Right ventricle myocardium inferior (tissue), 1 donor: ENCODE measurements at regions of chr3 and their contacts with region 1.

Region 1: DNA sequence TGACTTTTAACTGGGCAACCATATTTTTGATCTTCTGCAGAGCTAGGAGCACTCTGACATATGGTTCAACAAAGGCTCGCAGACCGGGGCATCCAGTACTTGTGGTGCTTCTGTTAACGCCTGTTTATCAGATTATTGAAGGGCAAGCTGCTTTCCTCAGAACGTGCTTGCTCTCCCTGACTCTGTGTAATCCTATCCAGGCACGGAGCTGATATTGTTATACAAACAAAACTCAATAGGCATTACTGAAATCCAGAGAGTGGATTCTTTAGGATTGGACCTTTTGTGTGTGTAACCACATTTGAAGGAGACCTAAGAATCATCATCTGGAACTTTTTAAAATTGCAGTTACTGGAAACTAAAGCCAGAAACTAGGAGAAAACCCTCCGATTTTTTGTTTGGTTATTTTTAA is 246.5 kb downstream of the PTPRG start:
- DNase-seq: no peak
- ATAC-seq: peak; percentile 42

Region 2: GRCh38 chr3:61574854-61575253 is 233.0 kb before region 1 on chr3:
- intact Hi-C with region 1: loop called (anchors 5 kb)
- DNase-seq: no peak
- ATAC-seq: no peak

Region 3: GRCh38 chr3:61725851-61726333 is 82.0 kb before region 1 on chr3:
- intact Hi-C with region 1: loop called (anchors 5 kb)
- DNase-seq: no peak
- ATAC-seq: peak; percentile 88

Region 4: DNA sequence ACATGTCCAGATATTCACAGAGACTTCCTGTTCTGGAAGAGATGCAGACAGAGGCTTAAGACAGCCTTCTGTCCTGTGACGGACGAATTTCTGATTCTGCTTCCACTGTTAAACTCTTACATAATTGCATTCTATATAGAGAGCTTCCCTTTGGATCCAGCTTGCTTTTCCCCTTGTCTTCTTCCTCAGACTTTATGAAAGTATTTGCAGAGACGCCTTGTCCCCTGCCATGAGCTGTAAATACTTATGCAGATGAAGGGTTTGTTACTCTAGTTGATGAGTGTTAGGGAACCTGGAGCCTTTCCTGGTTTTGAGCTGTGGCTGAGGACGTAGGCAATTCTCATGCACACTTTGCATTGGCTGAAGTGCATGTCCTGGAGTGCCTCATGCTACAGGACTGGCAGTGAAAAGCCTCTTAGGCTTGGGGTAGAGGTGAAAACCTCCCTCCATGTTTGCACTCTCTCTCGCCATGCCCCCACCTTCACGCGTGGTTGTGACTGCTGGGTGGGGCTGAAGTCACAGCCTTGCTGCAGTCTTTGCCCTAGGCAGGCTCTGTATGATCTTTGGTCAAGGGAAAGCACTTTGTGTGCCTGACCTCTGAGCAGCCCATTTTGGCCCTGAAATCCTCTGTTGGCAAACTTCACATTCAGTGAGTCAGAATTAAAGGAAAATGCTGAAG is 40.1 kb after region 1 on chr3:
- intact Hi-C with region 1: loop called (anchors 2 kb)
- DNase-seq: peak; percentile 82
- ATAC-seq: peak; percentile 94

Region 5: GRCh38 chr3:62109534-62109933 is 301.7 kb after region 1 on chr3:
- intact Hi-C with region 1: no loop called
- DNase-seq: no peak
- ATAC-seq: peak; percentile 82